ENCODE measurements at regions of chr10 and their contacts with region 1.

Region 1: DNA sequence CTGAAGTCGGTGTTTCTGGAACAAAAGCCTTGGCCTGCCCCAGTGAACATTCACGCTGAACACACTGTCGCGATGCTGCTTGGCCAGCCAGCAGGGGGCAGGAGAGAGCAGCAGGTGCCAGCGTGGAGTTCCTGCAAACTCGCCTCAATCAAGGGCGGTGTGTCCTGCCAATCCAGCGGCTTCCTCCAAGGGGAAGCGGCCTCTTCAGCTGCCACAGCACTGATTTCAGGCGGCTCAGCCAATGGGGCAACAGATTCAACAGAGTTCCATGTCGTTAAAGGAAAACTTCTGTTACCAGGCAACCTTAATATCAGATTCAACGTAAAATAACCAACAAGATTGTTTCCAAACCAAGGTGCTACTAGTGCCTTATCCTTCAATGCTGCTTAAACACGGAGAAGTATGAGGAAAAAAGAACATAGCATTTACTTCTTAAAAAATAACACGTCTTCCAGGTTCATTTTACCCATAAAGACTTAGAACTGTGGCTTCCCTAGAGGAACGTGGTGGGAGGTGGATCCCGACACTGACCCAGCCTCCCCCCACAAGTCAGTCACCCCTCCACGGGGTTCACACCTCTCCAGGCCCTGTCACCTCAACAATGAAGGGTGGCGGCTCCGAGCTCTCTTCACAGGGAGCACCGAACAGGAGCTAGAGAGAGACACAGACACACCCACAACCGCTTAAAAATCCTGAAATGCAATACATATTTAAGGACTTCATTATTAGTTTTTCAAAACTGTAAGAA is 178.2 kb downstream of the DIP2C start:
- DNase-seq: peak; percentile 92 to 95
- ATAC-seq: peak; percentile 89 to 95 (median 94)
- H3K4me3 ChIP-seq: peak overlapping the region in 1 of 10 donors; percentile 2
- H3K27ac ChIP-seq: peak overlapping the region in 8 of 10 donors; percentile 5 to 64 (median 52)
- H3K4me1 ChIP-seq: peaks cover 8 to 48% (median 24%) of the 10 kb centered on the region in 9 donors
- H3K27me3 ChIP-seq: no peaks in the 10 kb centered on the region
- CTCF ChIP-seq: peak; percentile 84 to 99 (median 98)

Region 2: GRCh38 chr10:317271-317769 is 194.0 kb before region 1 on chr10:
- intact Hi-C with region 1: no loop called
- DNase-seq: peak; percentile 27 to 56
- ATAC-seq: peak; percentile 17 to 86 (median 82)
- H3K4me3 ChIP-seq: no peak overlapping the region
- H3K27ac ChIP-seq: no peak overlapping the region
- H3K4me1 ChIP-seq: peaks cover 0 to 20% (median 5%) of the 10 kb centered on the region in 9 donors
- H3K27me3 ChIP-seq: no peaks in the 10 kb centered on the region
- CTCF ChIP-seq: no peak

Region 3: DNA sequence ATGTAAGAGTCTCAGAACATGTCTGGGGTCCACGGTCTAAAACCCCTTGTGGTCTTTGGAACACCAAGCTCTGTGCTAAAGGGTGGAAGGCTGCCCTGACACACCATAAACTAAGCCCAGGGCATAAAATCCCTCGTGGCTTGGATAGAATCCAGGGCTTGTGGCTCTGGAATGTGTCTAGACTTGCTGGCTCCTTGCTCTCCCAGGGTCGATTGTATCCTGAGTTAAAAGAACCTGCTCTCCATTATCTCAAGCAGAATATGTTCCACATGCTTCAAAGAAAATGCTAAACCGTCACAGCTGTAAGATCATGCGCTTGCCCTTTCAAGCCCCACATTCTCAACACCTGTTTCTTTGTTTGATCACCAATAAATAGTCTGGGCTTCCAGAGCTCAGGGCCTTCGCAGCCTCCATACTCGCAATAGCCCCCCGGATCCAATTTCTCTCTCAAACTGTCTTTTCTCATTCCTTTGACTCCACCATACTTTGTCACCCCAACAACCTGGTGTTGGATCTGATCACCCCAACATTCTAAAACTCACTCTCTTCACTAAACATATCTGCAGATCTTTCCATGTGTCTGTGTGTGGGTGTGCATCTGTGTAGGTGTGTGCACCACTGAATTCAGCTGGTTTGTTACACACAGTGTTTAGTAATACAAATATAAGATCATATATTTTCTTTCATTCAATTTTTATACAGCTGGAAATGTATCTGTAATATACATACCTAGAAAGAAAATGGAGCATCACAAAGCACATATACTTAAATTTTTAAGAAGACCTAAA is 137.6 kb before region 1 on chr10:
- intact Hi-C with region 1: no loop called
- DNase-seq: no peak
- ATAC-seq: no peak
- H3K4me3 ChIP-seq: no peak overlapping the region
- H3K27ac ChIP-seq: peak overlapping the region in 1 of 10 donors; percentile 35
- H3K4me1 ChIP-seq: peaks cover 0 to 30% (median 16%) of the 10 kb centered on the region in 9 donors
- H3K27me3 ChIP-seq: no peaks in the 10 kb centered on the region
- CTCF ChIP-seq: no peak

Region 4: DNA sequence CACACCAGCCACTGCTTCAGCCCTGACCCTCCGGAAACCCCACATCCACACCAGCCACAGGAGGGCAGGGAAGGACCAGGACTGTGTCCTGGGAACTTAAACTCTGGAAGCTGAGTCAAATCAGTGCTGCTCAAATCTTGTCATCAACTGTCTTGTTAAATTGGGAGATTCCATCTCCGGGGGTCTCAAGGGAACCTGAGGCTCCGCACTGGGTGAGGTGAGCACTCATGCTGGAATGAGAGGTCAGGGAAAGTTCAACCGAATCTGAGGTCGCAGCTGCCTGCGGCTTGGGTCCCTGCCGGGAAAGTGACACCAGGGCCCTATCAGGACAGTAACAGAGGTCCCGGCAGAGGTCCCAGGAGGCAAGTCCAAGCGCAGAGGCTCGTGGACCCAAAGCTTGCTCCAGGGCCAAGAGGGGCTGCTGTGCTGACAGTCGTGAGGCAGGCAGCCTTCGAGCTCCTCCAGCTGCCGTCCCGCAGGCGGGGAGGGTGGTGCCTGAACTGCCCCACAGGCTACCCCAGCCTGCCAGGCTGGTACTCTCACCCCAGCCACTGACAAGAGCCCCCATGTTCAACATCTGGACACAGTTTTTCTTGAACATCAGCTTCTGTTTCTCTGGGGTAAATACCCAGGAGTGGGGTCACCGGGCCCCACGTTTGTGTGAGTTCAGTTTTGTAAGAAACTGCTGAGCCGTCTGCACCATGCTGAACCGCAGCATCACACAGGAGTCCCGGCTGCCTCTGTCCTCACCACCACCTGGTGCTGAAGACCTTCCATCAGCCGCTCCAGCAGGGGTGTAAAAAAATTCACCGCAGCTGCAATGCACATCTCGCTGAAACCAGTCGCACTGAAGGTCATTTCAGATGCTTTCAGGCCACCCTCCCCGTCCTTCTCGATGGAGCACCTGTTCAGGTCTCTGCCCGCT is 77.2 kb after region 1 on chr10:
- intact Hi-C with region 1: loop called in 2 of 10 experiments (anchors 5 to 10 kb)
- DNase-seq: peak; percentile 56 to 67
- ATAC-seq: peak; percentile 73 to 84 (median 78)
- H3K4me3 ChIP-seq: no peak overlapping the region
- H3K27ac ChIP-seq: no peak overlapping the region
- H3K4me1 ChIP-seq: peaks cover 0 to 38% (median 21%) of the 10 kb centered on the region in 9 donors
- H3K27me3 ChIP-seq: no peaks in the 10 kb centered on the region
- CTCF ChIP-seq: peak in 5 of 9 donors; percentile 27 to 45 (median 40)

Region 5: GRCh38 chr10:624605-625332 is 113.5 kb after region 1 on chr10:
- intact Hi-C with region 1: loop called in 1 of 10 experiments (anchors 5 kb)
- DNase-seq: peak; percentile 72 to 79
- ATAC-seq: peak; percentile 81 to 92 (median 90)
- H3K4me3 ChIP-seq: peak overlapping the region in 8 of 10 donors; percentile 1 to 40 (median 24)
- H3K27ac ChIP-seq: peak overlapping the region; percentile 70 to 94 (median 82)
- H3K4me1 ChIP-seq: peaks cover 10 to 58% (median 32%) of the 10 kb centered on the region in 9 donors
- H3K27me3 ChIP-seq: peaks cover 0 to 3% (median 0%) of the 10 kb centered on the region in 7 donors
- CTCF ChIP-seq: peak in 1 of 9 donors; percentile 10

Region 6: GRCh38 chr10:683448-684071 is 172.3 kb after region 1 on chr10:
- intact Hi-C with region 1: loop called in 7 of 10 experiments (anchors 2 to 10 kb)
- DNase-seq: no peak
- ATAC-seq: peak in 1 of 8 donors; percentile 23
- H3K4me3 ChIP-seq: no peak overlapping the region
- H3K27ac ChIP-seq: peak overlapping the region in 3 of 10 donors; percentile 12 to 44 (median 17)
- H3K4me1 ChIP-seq: peaks cover 5 to 65% (median 40%) of the 10 kb centered on the region in 9 donors
- H3K27me3 ChIP-seq: peaks cover 0 to under 1% (median 0%) of the 10 kb centered on the region in 7 donors
- CTCF ChIP-seq: no peak

Region 7: DNA sequence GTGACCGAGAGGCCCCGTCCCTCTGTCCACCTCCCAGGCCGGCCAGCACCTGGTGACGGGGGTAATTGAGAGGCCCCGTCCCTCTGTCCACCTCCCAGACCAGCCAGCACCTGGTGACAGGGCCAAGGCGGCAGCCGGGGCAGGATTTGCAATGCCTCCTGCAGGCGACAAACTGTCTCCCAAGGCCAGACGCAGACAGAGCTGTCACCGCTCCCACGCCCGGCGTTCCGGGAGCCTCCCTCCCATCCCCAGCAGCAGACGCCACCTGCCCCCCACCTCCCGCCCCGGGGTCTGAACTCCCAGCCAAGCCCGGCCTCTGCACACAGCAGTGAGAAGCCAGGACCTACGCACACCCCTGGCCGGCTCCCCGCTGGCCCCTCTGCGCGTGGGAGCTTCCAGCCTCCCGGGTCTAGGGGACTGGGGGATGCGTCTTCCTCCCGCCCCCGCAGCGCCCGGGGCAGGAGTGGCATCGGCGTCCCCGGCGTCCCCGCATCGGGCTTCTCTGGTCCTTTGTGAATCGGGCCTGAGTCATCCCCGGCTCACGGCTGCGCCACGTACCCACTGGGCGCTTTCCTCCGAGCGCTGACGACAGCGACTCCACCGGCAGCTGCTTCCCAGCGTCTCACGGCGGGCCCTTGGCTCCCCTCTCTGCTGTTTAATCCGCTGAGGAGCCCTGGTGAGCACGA is 273.3 kb after region 1 on chr10:
- intact Hi-C with region 1: loop called in 9 of 10 experiments (anchors 1 to 5 kb)
- DNase-seq: peak; percentile 33 to 46
- ATAC-seq: peak; percentile 46 to 89 (median 66)
- H3K4me3 ChIP-seq: peak overlapping the region in 9 of 10 donors; percentile 35 to 56 (median 48)
- H3K27ac ChIP-seq: peak overlapping the region in 1 of 10 donors; percentile 13
- H3K4me1 ChIP-seq: peaks cover 0 to 28% (median 17%) of the 10 kb centered on the region in 9 donors
- H3K27me3 ChIP-seq: peaks cover 0 to 33% (median 26%) of the 10 kb centered on the region in 7 donors
- CTCF ChIP-seq: peak in 3 of 9 donors; percentile 12 to 26 (median 23)

Region 8: GRCh38 chr10:810351-810846 is 299.1 kb after region 1 on chr10:
- intact Hi-C with region 1: loop called in 1 of 10 experiments (anchors 5 kb)
- DNase-seq: no peak
- ATAC-seq: peak; percentile 36 to 73 (median 60)
- H3K4me3 ChIP-seq: no peak overlapping the region
- H3K27ac ChIP-seq: peak overlapping the region in 6 of 10 donors; percentile 38 to 65 (median 51)
- H3K4me1 ChIP-seq: peaks cover 0 to 18% (median 0%) of the 10 kb centered on the region in 9 donors
- H3K27me3 ChIP-seq: no peaks in the 10 kb centered on the region
- CTCF ChIP-seq: peak in 8 of 9 donors; percentile 13 to 55 (median 37)

Measured in heart right ventricle (tissue), 16 donors.